Left cardiac atrium (tissue), 4 donors: ENCODE measurements at regions of chrX and their contacts with region 1.

Region 1: GRCh38 chrX:152641996-152642395 is 4.3 kb downstream of the GABRQ start:
- DNase-seq: no peak
- ATAC-seq: peak in 1 of 2 donors; percentile 27

Region 2: DNA sequence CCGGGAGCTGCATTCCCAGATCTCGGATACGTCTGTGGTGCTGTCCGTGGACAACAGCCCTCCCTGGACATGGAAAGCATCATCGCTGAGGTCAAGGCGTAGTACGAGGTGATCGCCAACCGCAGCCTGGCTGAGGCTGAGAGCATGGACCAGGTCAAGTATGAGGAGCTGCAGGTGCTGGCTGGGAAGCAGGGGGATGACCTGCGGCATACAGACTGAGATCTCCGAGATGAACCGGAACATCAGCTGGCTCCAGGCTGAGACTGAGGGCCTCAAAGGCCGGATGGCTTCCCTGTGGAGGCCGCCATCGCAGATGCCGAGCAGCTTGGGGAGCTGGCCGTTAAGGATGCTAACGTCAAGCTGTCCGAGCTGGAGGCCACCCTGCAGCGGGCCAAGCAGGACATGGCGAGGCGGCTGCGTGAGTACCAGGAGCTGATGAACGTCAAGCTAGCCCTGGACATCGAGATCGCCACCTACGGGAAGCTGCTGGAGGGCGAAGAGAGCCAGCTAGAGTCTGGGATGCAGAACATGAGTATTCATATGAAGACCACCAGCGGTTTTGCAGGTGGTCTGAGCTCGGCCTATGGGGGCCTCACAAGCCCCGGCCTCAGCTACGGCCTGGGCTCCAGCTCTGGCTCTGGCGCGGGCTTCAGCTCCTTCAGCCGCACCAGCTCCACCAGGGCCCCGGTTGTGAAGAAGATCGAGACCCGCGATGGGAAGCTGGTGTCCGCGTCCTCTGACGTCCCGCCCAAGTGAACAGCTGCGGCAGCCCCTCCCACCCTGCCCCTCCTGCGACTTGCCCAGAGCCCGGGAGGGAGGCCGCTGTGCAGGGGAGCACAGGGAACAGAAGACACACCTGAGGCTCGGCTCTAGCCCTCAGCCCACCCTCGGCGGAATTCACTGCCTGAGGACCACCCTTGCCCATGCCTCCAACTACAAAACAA is 161.5 kb before region 1 on chrX:
- intact Hi-C with region 1: no loop called
- DNase-seq: no peak
- ATAC-seq: no peak

Region 3: DNA sequence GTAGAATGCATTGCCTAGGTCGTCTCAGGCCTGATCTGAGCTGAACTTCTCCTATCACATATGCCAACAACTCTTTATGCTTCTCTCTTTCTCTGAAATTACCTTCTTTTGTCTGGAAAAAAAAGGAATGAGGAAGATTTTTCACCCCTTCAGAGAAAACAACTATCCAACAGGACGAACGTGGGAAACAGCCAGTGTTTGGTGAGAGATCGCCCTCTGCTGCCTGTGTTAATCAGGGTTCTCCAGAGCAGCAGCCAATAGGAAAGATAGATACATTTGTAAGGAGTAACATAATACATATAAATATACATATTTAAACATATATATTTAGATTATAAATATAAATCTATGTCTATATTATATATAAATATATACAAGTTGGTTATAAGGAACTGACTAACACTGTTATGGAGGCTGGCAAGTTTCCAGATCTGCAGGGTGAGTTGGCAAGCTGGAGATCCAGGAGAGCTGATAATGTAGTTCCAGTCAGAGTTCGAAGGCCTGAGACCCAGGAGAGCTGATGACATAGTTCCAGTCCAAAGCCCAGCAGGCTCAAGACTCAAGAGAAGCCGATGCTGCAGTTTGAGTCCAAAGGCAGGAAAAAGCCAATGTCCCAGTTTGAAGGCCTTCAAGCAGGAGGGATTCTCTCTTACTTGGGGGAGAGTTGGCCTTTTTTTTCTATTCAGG is 175.2 kb after region 1 on chrX:
- intact Hi-C with region 1: loop called in 1 of 2 experiments (anchors 2 kb)
- DNase-seq: no peak
- ATAC-seq: no peak